Activated CD8-positive, alpha-beta memory T cell treated with anti-CD3 and anti-CD28 coated beads, Interleukin-2, amount 10 ng/mL, durations not matched to agents 7 days and 5 days (primary cell): ENCODE measurements at regions of chr14 and their contacts with region 1.

Region 1: GRCh38 chr14:70816525-70816924 is 7.2 kb upstream of the MAP3K9 start:
- DNase-seq: no peak
- ATAC-seq: no peak
- H3K4me3 Mint-ChIP-seq: no peak overlapping the region
- H3K27ac Mint-ChIP-seq: no peak overlapping the region
- H3K4me1 Mint-ChIP-seq: peaks cover 26% of the 10 kb centered on the region
- H3K27me3 Mint-ChIP-seq: peaks cover 8% of the 10 kb centered on the region

Region 2: DNA sequence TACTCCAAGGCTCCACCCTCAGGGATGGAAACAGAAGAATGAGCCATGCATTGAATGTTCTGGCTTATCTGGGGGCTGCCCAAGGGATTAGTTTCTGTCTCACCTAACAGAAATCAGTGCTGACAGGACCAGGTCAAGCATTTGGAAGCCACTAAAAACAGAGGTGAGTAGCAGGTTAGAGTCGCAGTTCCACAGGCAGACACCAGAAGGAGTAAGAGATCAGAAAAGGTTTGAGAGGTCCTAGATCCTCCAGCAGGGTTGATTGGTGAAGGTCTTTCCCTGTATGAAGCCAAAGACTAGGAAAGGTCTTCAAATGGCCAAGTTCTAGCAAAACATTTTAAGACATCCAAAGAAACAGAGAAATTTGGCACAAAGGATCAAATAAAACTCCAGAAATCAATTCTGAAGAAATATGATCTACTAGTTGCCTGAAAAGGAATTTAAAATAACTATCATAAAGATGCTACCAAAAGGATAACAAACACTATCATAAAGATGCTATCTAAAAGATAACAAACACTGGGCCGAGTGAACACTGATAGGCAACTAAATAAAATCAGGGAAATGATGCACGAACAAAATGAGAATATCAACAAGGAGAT is 194.3 kb before region 1 on chr14:
- CTCF ChIA-PET with region 1: interaction called, 11 read pairs
- DNase-seq: peak; percentile 62
- ATAC-seq: peak; percentile 84
- H3K4me3 Mint-ChIP-seq: no peak overlapping the region
- H3K27ac Mint-ChIP-seq: no peak overlapping the region
- H3K4me1 Mint-ChIP-seq: no peaks in the 10 kb centered on the region
- H3K27me3 Mint-ChIP-seq: peaks cover 8% of the 10 kb centered on the region

Region 3: GRCh38 chr14:70897464-70897863 is 80.9 kb after region 1 on chr14:
- CTCF ChIA-PET with region 1: interaction called, 18 read pairs
- DNase-seq: no peak
- ATAC-seq: no peak
- H3K4me3 Mint-ChIP-seq: no peak overlapping the region
- H3K27ac Mint-ChIP-seq: no peak overlapping the region
- H3K4me1 Mint-ChIP-seq: peaks cover 65% of the 10 kb centered on the region
- H3K27me3 Mint-ChIP-seq: peaks cover 5% of the 10 kb centered on the region

Region 4: GRCh38 chr14:70972107-70972976 is 155.8 kb after region 1 on chr14:
- CTCF ChIA-PET with region 1: interaction called, 29 read pairs
- DNase-seq: peak; percentile 90
- ATAC-seq: peak; percentile 84
- H3K4me3 Mint-ChIP-seq: no peak overlapping the region
- H3K27ac Mint-ChIP-seq: peak overlapping the region; percentile 32
- H3K4me1 Mint-ChIP-seq: peaks cover 13% of the 10 kb centered on the region
- H3K27me3 Mint-ChIP-seq: no peaks in the 10 kb centered on the region

Region 5: DNA sequence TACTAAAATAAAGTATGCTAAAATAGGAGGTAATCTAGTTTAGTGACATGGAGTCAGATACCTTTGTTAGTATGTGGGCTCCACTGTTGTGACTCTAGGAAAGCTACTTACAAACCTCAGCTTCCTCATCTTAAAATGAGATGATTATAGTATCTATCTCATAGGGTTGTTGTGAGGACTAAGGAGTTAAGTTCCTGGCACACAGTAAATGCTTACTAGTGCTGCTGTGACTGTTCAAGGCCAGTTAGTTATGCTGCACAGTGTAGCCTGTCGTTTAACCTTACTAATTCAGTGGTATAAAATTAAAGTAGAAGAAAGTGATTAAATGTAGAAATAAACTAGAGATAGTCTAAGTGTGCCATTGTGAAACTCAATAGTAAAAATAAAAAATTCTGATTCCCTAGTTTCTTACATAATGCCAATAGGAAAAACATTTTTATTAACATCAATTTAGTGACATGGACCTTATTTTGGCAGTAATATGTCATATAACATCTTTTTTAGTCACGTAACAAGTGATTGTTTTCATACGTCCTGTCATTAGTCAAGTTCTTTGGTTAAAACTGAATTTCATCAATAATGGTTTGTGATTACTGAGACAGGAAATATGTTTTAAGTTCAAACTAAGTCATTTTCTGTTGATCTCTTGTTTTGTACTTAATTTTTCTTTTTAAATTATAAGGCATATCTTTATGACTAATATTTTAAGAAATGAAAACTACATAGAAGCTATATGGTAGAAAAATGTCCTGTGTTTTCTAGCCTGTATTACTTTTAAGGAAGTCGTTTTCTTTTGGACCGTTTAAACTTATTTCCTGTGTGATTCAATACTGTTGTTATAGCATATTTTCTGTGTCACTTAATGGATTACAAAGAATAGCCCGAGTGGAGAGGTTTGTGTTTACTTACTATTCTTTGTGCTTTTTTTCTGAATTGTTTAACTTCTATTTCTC is 164.8 kb after region 1 on chr14:
- CTCF ChIA-PET with region 1: interaction called, 29 read pairs
- DNase-seq: no peak
- ATAC-seq: peak; percentile 72
- H3K4me3 Mint-ChIP-seq: peak overlapping the region; percentile 22
- H3K27ac Mint-ChIP-seq: peak overlapping the region; percentile 80
- H3K4me1 Mint-ChIP-seq: peaks cover 30% of the 10 kb centered on the region
- H3K27me3 Mint-ChIP-seq: no peaks in the 10 kb centered on the region

Region 6: DNA sequence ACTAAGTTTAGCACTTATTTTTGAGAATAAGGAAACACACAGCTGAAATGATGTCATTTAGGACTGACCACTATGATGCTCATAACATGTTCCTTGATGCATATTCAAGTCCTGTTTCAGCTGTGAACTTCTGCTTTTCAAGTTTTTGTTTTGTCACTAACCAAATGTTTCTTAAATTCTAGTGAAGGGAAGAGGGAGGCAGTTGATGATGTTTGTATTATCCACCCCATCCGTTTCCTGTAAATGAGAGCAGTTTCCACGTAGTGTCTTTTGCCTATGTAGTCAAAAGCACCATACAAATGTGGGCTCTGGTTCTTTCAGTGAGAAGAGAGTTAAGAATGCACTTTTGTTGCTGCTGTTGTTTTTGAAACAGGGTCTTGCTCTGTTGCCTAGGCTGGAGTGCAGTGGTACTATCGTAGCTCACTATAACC is 582.5 kb after region 1 on chr14:
- CTCF ChIA-PET with region 1: no interaction called
- DNase-seq: peak; percentile 41
- ATAC-seq: peak; percentile 80
- H3K4me3 Mint-ChIP-seq: peak overlapping the region; percentile 4
- H3K27ac Mint-ChIP-seq: peak overlapping the region; percentile 86
- H3K4me1 Mint-ChIP-seq: peaks cover 41% of the 10 kb centered on the region
- H3K27me3 Mint-ChIP-seq: no peaks in the 10 kb centered on the region